Left lung (tissue), 14 donors: ENCODE measurements at regions of chr11 and their contacts with region 1.

Region 1: GRCh38 chr11:102495161-102496042 is 35.1 kb downstream of the MMP7 start:
- DNase-seq: peak in 2 of 4 donors; percentile 65 to 86
- ATAC-seq: peak; percentile 94
- H3K4me3 ChIP-seq: no peak overlapping the region
- H3K27ac ChIP-seq: no peak overlapping the region
- H3K4me1 ChIP-seq: no peaks in the 10 kb centered on the region
- H3K27me3 ChIP-seq: no peaks in the 10 kb centered on the region
- CTCF ChIP-seq: peak; percentile 54 to 80

Region 2: GRCh38 chr11:102341844-102342318 is 153.5 kb before region 1 on chr11:
- intact Hi-C with region 1: loop called in 1 of 2 experiments (anchors 5 kb)
- DNase-seq: peak in 3 of 4 donors; percentile 64 to 83 (median 68)
- ATAC-seq: peak; percentile 77
- H3K4me3 ChIP-seq: no peak overlapping the region
- H3K27ac ChIP-seq: no peak overlapping the region
- H3K4me1 ChIP-seq: peaks cover 0 to 17% of the 10 kb centered on the region in 2 donors
- H3K27me3 ChIP-seq: no peaks in the 10 kb centered on the region
- CTCF ChIP-seq: peak; percentile 75 to 76

Region 3: GRCh38 chr11:102390667-102391465 is 104.5 kb before region 1 on chr11:
- intact Hi-C with region 1: loop called in 1 of 2 experiments (anchors 5 kb)
- DNase-seq: peak in 3 of 4 donors; percentile 45 to 70 (median 68)
- ATAC-seq: peak; percentile 98
- H3K4me3 ChIP-seq: no peak overlapping the region
- H3K27ac ChIP-seq: no peak overlapping the region
- H3K4me1 ChIP-seq: peaks cover 0 to 4% of the 10 kb centered on the region in 2 donors
- H3K27me3 ChIP-seq: no peaks in the 10 kb centered on the region
- CTCF ChIP-seq: peak; percentile 85 to 87

Region 4: GRCh38 chr11:102545701-102546100 is 50.3 kb after region 1 on chr11:
- intact Hi-C with region 1: no loop called
- DNase-seq: no peak
- ATAC-seq: no peak
- H3K4me3 ChIP-seq: no peak overlapping the region
- H3K27ac ChIP-seq: no peak overlapping the region
- H3K4me1 ChIP-seq: no peaks in the 10 kb centered on the region
- H3K27me3 ChIP-seq: no peaks in the 10 kb centered on the region
- CTCF ChIP-seq: no peak